Dendritic cell treated with granulocyte-macrophage colony-stimulating factor and Interleukin-4, amounts not matched to agents 40 ng/mL and 50 ng/mL, for 4 days (primary cell): ENCODE measurements at regions of chr4 and their contacts with region 1.

Region 1: DNA sequence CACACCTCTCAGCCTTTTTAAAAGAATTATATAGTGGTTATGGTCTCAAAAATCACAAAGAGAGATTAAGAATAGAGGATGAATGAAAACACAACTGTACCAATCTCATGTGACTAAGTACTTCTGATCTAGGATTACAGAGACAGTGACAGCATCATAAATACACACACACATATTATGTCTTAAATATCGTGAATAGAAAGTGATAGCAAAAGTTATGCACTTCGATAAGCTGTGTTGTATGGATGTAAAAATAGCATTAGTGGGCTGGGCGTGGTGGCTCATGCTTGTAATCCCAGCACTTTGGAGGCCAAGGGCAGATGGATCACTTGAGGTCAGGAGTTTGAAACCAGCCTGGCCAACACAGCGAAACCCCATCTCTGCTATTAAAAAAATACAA is 25.0 kb downstream of the GYPA start:
- H3K4me3 Mint-ChIP-seq: no peak overlapping the region
- H3K27ac Mint-ChIP-seq: no peak overlapping the region
- H3K4me1 Mint-ChIP-seq: no peaks in the 10 kb centered on the region
- H3K27me3 Mint-ChIP-seq: no peaks in the 10 kb centered on the region

Region 2: GRCh38 chr4:144357975-144358374 is 242.5 kb after region 1 on chr4:
- intact Hi-C with region 1: no loop called
- H3K4me3 Mint-ChIP-seq: no peak overlapping the region
- H3K27ac Mint-ChIP-seq: no peak overlapping the region
- H3K4me1 Mint-ChIP-seq: peaks cover 17% of the 10 kb centered on the region
- H3K27me3 Mint-ChIP-seq: peaks cover 19% of the 10 kb centered on the region

Region 3: GRCh38 chr4:144861471-144861870 is 746.0 kb after region 1 on chr4:
- intact Hi-C with region 1: no loop called
- H3K4me3 Mint-ChIP-seq: no peak overlapping the region
- H3K27ac Mint-ChIP-seq: no peak overlapping the region
- H3K4me1 Mint-ChIP-seq: no peaks in the 10 kb centered on the region
- H3K27me3 Mint-ChIP-seq: no peaks in the 10 kb centered on the region

Region 4: GRCh38 chr4:144975718-144976117 is 860.2 kb after region 1 on chr4:
- intact Hi-C with region 1: loop called (anchors 5 kb)
- H3K4me3 Mint-ChIP-seq: no peak overlapping the region
- H3K27ac Mint-ChIP-seq: no peak overlapping the region
- H3K4me1 Mint-ChIP-seq: no peaks in the 10 kb centered on the region
- H3K27me3 Mint-ChIP-seq: no peaks in the 10 kb centered on the region